Sigmoid colon (tissue), 7 donors: ENCODE measurements at regions of chr9 and their contacts with region 1.

Region 1: GRCh38 chr9:16039988-16040761 is 487.3 kb downstream of the CCDC171 start:
- DNase-seq: no peak
- H3K4me3 ChIP-seq: peak overlapping the region in 1 of 4 donors; percentile 0
- H3K27ac ChIP-seq: peak overlapping the region in 3 of 4 donors; percentile 53 to 62 (median 55)
- H3K4me1 ChIP-seq: peaks cover 0 to 24% (median 20%) of the 10 kb centered on the region in 4 donors
- H3K27me3 ChIP-seq: no peaks in the 10 kb centered on the region
- CTCF ChIP-seq: no peak
- EP300 ChIP-seq: no peak
- POLR2A ChIP-seq: no peak

Region 2: DNA sequence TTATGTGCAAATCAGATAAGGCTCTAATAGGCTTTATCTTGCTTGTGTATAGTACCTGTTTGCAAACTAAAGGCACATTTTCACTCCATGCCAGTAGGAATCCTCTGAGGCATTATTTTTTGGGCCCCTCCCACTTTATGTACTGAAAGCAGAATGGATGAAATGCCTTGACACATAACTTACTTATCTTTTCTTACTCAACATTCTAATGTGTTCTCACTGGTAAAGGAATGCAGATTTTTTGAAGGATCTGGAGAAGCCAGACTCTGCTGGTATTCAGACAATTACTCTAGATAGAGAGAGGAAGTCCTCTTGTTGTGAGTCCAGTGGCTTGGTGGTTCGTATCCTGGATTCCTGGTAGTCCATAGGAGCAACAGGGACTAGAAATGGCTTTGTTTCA is 150.6 kb before region 1 on chr9:
- intact Hi-C with region 1: no loop called
- DNase-seq: no peak
- H3K4me3 ChIP-seq: no peak overlapping the region
- H3K27ac ChIP-seq: no peak overlapping the region
- H3K4me1 ChIP-seq: no peaks in the 10 kb centered on the region
- H3K27me3 ChIP-seq: no peaks in the 10 kb centered on the region
- CTCF ChIP-seq: no peak
- EP300 ChIP-seq: no peak
- POLR2A ChIP-seq: no peak

Region 3: DNA sequence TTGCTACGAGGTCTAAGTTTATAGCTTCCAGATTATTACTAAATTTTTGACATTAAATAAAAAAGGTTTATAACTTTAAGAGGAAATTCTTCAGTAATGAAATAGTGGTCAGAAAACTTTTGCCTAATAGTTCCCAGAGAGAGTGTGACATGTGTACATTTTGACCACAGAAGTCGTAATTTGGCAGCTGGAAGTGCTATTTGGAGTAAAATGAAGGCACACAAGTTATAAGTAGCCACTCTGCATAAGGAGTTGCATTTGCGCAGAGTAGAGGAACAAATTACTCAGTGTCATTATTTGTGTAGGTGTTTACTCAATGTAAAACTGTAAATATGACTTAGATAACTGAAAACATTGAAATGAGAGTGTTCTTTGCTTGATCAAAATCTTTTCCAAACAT is 79.0 kb before region 1 on chr9:
- intact Hi-C with region 1: no loop called
- DNase-seq: no peak
- H3K4me3 ChIP-seq: no peak overlapping the region
- H3K27ac ChIP-seq: no peak overlapping the region
- H3K4me1 ChIP-seq: no peaks in the 10 kb centered on the region
- H3K27me3 ChIP-seq: no peaks in the 10 kb centered on the region
- CTCF ChIP-seq: no peak
- EP300 ChIP-seq: no peak
- POLR2A ChIP-seq: no peak

Region 4: DNA sequence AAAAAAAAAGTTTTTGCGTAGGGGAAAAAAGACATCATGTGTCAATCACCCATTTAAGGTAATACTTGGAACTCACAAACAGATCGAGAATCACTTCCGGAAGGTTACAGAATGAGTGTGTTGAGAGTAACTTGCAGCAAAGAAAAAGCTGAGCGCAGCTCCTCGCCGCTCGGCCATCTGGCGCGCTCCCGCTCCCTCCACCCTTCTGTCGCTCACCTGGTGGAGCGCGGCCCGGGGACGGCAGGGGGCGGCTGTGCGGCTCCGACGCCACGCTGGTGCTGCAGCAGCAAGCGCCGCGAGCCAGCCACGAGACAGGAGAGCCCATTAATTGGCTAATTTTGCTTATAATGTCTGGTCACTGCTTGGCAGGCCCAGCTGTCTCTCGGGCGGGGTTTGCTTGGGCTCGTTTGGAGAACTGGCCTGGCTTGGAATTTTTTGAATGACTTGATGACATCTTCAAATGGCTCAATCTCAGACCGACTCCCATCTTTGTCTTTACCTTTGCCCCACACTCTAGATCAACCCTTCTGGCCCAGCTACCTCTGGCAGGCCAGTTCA is 114.4 kb after region 1 on chr9:
- intact Hi-C with region 1: loop called (anchors 10 kb)
- DNase-seq: no peak
- H3K4me3 ChIP-seq: peak overlapping the region in 3 of 4 donors; percentile 10 to 21 (median 17)
- H3K27ac ChIP-seq: no peak overlapping the region
- H3K4me1 ChIP-seq: peaks cover 0 to 44% (median 40%) of the 10 kb centered on the region in 4 donors
- H3K27me3 ChIP-seq: no peaks in the 10 kb centered on the region
- CTCF ChIP-seq: peak in 2 of 4 experiments; percentile 31 to 36
- EP300 ChIP-seq: no peak
- POLR2A ChIP-seq: no peak